ENCODE measurements at regions of chr2 and their contacts with region 1.

Region 1: DNA sequence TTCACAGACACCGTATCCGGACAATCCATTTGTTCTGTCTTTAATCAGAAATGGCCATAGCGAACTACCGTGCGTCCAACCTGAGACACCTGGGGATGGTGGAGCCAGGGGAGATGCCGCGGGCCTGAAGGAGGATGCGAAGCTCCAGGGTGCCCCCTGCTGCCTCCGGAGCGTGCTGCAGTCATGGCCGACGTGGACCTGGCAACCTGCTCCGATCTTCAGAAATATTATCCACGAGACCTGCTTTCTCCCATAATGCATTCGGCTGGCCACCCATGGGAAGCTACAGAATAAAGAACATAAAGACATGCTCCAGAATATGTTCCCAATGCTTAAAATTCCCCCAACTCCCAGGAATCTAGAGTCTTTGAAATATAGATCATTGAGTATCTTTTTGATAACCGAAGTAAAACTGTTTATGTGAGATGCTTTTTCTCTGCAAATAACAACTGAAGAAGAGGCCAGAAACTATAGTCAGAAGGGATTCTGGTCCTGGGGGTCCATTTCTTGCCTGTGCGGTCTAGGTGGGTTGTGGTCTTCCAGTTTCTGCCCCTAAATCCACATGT is 30.7 kb upstream of the SLC66A3 start:
- DNase-seq: peak; percentile 59
- H3K27ac ChIP-seq: no peak overlapping the region
- CTCF ChIP-seq: peak; percentile 31

Region 2: GRCh38 chr2:10832203-10832936 is 292.2 kb before region 1 on chr2:
- CTCF ChIA-PET with region 1: interaction called, 51 read pairs
- POLR2A ChIA-PET with region 1: no interaction called
- DNase-seq: peak; percentile 82
- H3K27ac ChIP-seq: no peak overlapping the region
- CTCF ChIP-seq: peak; percentile 97

Measured in RWPE1 (cell line).